Endothelial cell of umbilical vein (primary cell): ENCODE measurements at regions of chr1 and their contacts with region 1.

Region 1: DNA sequence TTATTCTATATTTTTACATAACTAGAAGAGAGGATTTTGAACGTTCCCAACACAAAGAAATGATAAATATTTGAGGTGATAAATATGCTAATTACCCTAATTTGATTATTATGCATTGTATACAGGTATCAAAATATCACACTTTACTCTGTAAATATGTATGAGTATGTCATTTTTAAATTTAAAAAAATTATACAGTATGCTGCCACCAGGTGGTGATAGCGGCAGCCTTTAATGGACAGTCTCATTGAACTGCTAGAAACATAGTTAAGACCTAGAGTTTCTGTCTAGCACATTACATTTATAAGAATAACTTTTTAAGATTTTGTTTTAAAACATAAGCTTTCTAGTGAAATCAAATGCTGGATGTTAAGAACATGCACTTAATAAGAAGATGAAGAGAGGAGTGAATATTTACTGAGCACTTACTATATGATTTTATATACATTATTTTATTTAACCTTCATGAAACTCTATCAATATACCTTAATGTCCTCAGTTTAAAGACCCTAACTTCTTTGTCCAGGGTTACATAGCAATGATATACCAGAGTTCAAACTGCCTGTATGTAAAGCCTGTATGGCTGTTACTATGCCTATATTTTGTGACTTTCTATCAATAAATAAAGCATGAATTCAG is 207.1 kb downstream of the NUF2 start:
- DNase-seq: peak; percentile 48
- H3K4me3 ChIP-seq: no peak overlapping the region
- H3K27ac ChIP-seq: no peak overlapping the region
- H3K4me1 ChIP-seq: no peaks in the 10 kb centered on the region
- H3K27me3 ChIP-seq: no peaks in the 10 kb centered on the region
- CTCF ChIP-seq: peak; percentile 21 to 34
- POLR2A ChIP-seq: no peak

Region 2: GRCh38 chr1:163410073-163410999 is 118.5 kb before region 1 on chr1:
- CTCF ChIA-PET with region 1: no interaction called
- POLR2A ChIA-PET with region 1: no interaction called
- dilution Hi-C with region 1: no loop called
- intact Hi-C with region 1: loop called (anchors 1 kb)
- DNase-seq: peak; percentile 66
- H3K4me3 ChIP-seq: no peak overlapping the region
- H3K27ac ChIP-seq: no peak overlapping the region
- H3K4me1 ChIP-seq: no peaks in the 10 kb centered on the region
- H3K27me3 ChIP-seq: peaks cover 0 to 2% of the 10 kb centered on the region in 2 experiments
- CTCF ChIP-seq: peak; percentile 67 to 72
- POLR2A ChIP-seq: no peak